HEK293 (cell line): ENCODE measurements at regions of chr15 and their contacts with region 1.

Region 1: DNA sequence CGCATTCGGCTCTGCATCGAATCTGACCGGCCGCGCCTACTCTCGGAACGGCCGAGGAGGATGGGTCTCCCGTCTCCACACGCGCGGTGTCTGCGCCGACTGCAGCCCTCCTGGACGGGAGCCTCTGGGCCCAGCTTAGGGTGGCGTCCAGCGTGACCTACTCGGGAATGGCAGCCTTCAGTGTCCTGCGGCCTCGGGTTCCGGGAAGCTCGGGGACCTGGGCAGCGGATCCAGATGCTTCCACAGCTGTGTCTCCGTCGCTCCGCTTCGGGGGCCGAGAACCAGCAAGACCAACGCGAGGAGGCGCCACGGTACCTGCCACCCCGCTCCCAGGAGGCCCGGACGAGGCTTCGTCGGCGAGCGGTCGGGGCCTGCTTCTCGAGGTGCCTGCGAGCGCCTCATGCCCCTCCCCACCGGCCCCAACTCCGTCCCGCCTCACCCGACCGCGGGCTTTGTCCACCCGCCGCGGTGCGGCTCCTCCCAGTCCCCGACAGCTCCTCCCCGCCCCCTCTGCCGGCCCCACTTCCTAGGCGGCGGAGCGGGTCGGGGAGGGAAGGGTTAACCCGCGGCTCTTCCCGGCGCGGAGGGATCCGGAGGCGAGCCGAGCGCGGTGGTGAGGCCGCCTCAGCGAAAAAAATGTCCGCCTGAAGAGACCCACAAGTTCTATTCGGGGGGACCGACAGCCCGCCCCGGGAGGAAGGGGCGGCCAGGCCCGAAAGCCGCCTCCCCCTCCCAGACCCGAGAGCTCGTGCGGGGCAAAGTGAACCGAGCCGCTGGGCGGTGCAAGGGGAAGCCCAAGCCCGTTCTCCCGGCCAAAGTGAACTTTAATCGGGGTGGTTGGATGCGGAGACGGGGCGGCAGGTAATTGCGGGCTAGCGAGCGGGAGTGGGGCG is at the start of gene TCF12:
- H3K4me3 ChIP-seq: peak within 1 kb of the TSS; percentile 91
- H3K27ac ChIP-seq: peak within 1 kb of the TSS; percentile 88
- H3K4me1 ChIP-seq: peaks cover 10% of the 10 kb centered on the region
- CTCF ChIP-seq: peak; percentile 45; the same call in 1 of the 2 replicates

Region 2: DNA sequence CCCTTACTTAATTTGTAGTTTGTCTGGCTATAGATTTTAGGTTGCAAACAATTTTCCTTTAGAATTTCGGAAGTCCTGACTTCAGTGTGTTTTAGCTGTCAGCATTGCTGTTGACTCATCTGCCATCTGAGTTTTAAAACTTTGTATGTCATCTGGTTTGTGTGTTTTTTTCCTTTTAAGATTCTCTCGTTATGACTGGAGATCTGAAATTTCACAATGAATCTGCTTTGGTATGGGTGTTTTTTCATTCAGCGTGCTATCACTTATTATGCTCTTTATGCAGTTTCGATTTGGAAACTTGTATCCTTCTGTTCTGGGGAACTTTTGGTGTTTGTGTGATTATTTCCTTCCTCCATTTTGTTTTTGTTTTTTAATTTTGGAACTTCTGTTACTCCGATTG is 131.3 kb before region 1 on chr15:
- CTCF ChIA-PET with region 1: interaction called, 3 read pairs
- POLR2A ChIA-PET with region 1: interaction called, 10 read pairs
- H3K4me3 ChIP-seq: no peak overlapping the region
- H3K27ac ChIP-seq: no peak overlapping the region
- H3K4me1 ChIP-seq: no peaks in the 10 kb centered on the region
- CTCF ChIP-seq: no peak

Region 3: GRCh38 chr15:56886932-56887781 is 31.1 kb before region 1 on chr15:
- CTCF ChIA-PET with region 1: interaction called, 4 read pairs
- POLR2A ChIA-PET with region 1: interaction called, 29 read pairs
- H3K4me3 ChIP-seq: peak overlapping the region; percentile 61
- H3K27ac ChIP-seq: peak overlapping the region; percentile 54
- H3K4me1 ChIP-seq: no peaks in the 10 kb centered on the region
- CTCF ChIP-seq: peak; percentile 67

Region 4: DNA sequence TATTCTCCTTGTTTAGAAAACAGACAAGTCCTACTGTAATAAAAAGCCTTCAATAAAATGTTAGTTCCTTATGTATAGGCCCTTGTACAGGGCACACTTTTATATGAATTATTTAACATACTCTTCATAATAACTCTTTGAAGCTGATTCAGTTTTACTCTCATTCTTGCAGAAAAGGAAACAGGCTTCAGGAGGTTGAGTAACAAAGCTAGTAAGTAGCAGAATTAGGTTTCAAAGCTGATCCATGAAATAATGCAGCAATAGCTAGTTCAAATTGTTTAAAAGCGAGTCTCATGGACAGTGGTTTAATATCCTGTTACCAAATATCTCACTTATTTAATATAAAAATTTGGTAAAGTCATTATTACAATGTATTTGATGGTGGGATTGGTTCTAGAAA is 25.1 kb after region 1 on chr15:
- CTCF ChIA-PET with region 1: no interaction called
- POLR2A ChIA-PET with region 1: no interaction called
- H3K4me3 ChIP-seq: no peak overlapping the region
- H3K27ac ChIP-seq: no peak overlapping the region
- H3K4me1 ChIP-seq: peaks cover 7% of the 10 kb centered on the region
- CTCF ChIP-seq: no peak